Dendritic cell treated with granulocyte-macrophage colony-stimulating factor and Interleukin-4, amounts not matched to agents 40 ng/mL and 50 ng/mL, for 4 days (primary cell): ENCODE measurements at regions of chr15 and their contacts with region 1.

Region 1: DNA sequence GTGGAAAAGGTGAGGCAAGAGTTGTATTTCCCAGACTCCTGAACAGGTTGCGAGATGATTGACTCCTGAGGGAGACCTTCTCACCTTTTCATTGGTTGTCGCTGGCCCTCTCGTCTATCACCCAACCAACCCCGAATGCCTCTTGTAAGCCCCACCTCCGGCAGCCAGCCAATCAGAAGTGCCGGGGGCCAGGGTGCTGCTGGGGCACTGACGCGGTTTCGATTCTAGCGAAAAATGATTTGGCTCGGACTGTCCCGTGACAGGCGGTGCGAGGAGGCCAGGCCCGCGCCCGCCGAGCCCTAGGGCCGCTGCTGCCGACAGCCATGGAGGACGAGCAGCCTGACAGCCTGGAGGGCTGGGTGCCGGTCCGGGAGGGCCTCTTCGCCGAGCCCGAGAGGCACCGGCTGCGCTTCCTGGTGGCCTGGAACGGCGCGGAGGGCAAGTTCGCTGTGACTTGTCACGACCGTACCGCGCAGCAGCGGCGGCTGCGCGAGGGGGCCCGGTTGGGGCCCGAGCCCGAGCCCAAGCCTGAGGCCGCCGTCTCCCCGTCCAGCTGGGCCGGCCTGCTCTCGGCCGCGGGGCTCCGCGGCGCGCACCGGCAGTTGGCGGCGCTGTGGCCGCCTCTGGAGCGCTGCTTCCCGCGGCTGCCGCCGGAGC is at the start of gene WHAMM:
- H3K4me3 Mint-ChIP-seq: peak within 1 kb of the TSS; percentile 89
- H3K27ac Mint-ChIP-seq: peak within 1 kb of the TSS; percentile 93
- H3K4me1 Mint-ChIP-seq: peaks cover 26% of the 10 kb centered on the region
- H3K27me3 Mint-ChIP-seq: no peaks in the 10 kb centered on the region

Region 2: GRCh38 chr15:82749951-82750830 is 59.3 kb before region 1 on chr15:
- intact Hi-C with region 1: loop called (anchors 2 kb)
- H3K4me3 Mint-ChIP-seq: peak overlapping the region; percentile 99
- H3K27ac Mint-ChIP-seq: peak overlapping the region; percentile 92
- H3K4me1 Mint-ChIP-seq: peaks cover 32% of the 10 kb centered on the region
- H3K27me3 Mint-ChIP-seq: no peaks in the 10 kb centered on the region